ENCODE measurements at regions of chr11 and their contacts with region 1.

Region 1: GRCh38 chr11:118973962-118974361 is 2.4 kb downstream of the FOXR1 start:
- DNase-seq: no peak
- ATAC-seq: no peak
- H3K4me3 ChIP-seq: no peak overlapping the region
- H3K27ac ChIP-seq: no peak overlapping the region
- H3K4me1 ChIP-seq: no peaks in the 10 kb centered on the region
- H3K27me3 ChIP-seq: peaks cover 0 to 14% (median 6%) of the 10 kb centered on the region in 3 donors
- CTCF ChIP-seq: no peak

Region 2: GRCh38 chr11:118939953-118940598 is 33.9 kb before region 1 on chr11:
- intact Hi-C with region 1: loop called in 1 of 2 experiments (anchors 5 kb)
- DNase-seq: no peak
- ATAC-seq: no peak
- H3K4me3 ChIP-seq: no peak overlapping the region
- H3K27ac ChIP-seq: no peak overlapping the region
- H3K4me1 ChIP-seq: no peaks in the 10 kb centered on the region
- H3K27me3 ChIP-seq: no peaks in the 10 kb centered on the region
- CTCF ChIP-seq: no peak

Region 3: DNA sequence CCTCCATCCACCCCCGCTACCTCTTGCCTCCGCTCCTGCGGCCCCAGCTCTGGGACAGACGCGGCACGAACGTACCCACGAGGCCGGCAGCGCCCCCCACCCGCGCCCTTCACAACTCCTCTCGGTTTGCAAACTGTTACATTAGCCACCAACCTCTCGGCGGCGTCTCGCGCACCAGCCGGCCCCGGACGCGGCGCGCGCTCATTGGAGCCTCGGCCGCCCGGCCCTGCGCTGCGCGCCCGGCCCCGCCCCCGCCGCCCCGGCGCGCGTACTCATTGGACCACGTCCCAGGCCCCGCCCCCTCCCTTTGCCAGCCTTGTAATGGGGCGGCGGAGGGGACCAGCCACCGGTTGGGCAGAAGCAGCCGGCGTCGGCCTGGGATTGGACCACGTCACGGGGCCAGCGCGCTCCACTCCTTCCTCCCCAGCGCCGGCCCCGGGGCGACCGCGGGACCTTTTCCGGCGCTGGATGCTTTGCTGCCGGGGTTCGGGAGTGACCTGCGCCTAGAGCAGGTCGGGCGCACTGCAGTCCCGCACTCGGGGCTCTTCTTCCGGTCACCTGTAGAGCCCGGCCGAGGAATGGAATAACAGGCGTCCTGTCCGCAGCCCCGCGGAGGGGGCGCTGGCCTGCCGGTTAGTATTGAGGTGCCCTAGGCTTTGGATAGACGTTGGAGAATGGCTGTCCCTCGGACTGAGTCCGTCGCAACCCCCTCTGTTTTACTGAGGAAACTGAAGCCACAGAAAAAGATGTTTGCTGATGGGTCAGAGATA is 83.2 kb after region 1 on chr11 and contains the start of gene HYOU1:
- intact Hi-C with region 1: no loop called
- DNase-seq: peak; percentile 99
- ATAC-seq: peak; percentile 96 to 98 (median 97)
- H3K4me3 ChIP-seq: peak within 1 kb of the TSS; percentile 92
- H3K27ac ChIP-seq: peak within 1 kb of the TSS; percentile 84
- H3K4me1 ChIP-seq: peaks cover 17% of the 10 kb centered on the region
- H3K27me3 ChIP-seq: no peaks in the 10 kb centered on the region
- CTCF ChIP-seq: no peak
- total RNA-seq, gene HYOU1: 24.1 to 40.1 (median 33.2) TPM

Region 4: GRCh38 chr11:119134389-119134978 is 160.5 kb after region 1 on chr11:
- intact Hi-C with region 1: no loop called
- DNase-seq: no peak
- ATAC-seq: peak in 3 of 4 donors; percentile 22 to 42 (median 27)
- H3K4me3 ChIP-seq: no peak overlapping the region
- H3K27ac ChIP-seq: no peak overlapping the region
- H3K4me1 ChIP-seq: no peaks in the 10 kb centered on the region
- H3K27me3 ChIP-seq: no peaks in the 10 kb centered on the region
- CTCF ChIP-seq: peak; percentile 34

Measured in psoas muscle (tissue), 8 donors.